Caki2 (cell line): ENCODE measurements at regions of chr15 and their contacts with region 1.

Region 1: GRCh38 chr15:96330450-96331145 is at the start of gene NR2F2:
- DNase-seq: peak; percentile 97
- total RNA-seq, gene NR2F2: 7.0 and 16.0 TPM in 2 replicates

Region 2: DNA sequence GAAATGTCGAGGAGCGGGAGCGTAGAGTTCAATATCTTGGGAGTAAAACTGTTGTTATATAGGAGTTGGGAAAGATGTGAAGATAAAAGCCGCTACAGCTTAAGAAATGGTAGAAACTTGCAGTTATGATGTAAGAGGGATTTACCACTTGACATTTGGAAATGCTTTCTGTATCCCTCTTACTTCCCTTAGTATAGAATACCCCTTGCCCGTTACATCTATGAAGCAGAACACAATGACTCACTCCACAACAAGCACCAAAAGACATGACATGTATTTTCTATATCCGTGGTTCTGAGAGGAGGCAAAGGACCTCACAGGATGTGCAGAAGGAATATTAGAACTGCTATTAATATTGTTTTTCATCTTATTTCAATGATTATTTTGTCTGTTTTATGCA is 254.2 kb before region 1 on chr15:
- in situ Hi-C with region 1: no loop called
- DNase-seq: no peak

Region 3: DNA sequence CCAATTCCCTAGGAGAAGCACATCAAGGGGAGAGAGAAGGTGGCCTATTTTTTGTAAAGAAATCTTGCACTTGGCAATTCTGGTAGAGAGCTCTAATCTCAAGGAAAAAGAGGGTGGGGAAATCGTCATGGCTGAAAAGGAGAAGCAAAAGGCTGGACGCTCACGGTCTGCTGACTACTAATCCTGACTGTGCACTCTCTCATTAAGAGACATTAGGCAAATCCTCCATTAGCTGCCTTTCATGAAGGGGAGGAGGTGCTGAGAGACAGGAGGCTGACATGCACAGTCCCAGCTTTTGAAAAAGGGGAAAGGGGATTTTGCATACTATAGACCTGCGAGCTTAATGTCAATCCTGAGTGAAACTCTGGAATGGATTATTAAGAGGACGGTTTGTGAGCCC is 169.9 kb after region 1 on chr15:
- in situ Hi-C with region 1: no loop called
- DNase-seq: no peak

Region 4: DNA sequence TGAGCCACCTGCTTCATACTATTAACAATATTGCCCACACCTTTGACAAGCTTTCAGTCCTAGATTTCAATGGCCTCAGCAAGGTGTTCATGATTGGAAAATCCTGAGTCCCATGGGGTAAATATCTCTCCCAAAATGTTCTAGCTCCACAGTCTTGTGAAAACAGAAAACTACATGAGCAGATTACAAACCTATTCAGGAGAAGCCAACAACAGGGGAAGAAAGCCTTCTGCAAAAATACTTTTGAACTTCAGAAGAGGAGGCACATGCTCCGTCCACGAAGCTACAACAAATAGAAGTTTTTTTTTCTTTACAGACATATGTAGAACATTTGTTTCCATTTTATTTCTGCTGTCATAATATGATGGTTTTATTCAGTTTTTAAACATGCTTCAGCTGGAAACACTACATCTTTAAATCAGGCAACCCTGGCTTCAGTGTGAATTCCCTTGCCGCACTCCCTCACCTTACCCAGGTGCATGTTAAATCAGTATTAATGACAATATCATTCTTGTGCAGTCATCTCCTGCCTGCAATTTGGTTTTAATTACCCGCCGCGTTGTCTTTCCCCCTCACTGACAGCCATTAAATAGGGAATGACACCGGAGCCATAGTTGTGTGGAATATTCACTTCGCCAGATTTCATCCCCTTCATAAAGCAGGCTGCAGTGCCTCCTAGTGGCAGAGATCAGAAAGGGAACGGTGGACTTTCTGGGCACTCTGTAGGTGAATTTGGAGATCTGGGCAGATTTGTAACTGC is 904.4 kb after region 1 on chr15:
- in situ Hi-C with region 1: loop called (anchors 25 kb)
- DNase-seq: peak; percentile 51